ENCODE measurements at regions of chr19 and their contacts with region 1.

Region 1: GRCh38 chr19:49200238-49200862 is 42.8 kb downstream of the TRPM4 start:
- DNase-seq: peak; percentile 77
- H3K4me3 ChIP-seq: no peak overlapping the region
- H3K27ac ChIP-seq: no peak overlapping the region
- H3K4me1 ChIP-seq: no peaks in the 10 kb centered on the region; a peak in 1 of 4 replicates
- H3K27me3 ChIP-seq: no peaks in the 10 kb centered on the region
- CTCF ChIP-seq: no peak
- EP300 ChIP-seq: no peak
- RAD21 ChIP-seq: no peak

Region 2: GRCh38 chr19:49085020-49085867 is 115.1 kb before region 1 on chr19 and contains the start of gene SNRNP70:
- CTCF ChIA-PET with region 1: interaction called, 10 read pairs
- POLR2A ChIA-PET with region 1: no interaction called
- DNase-seq: peak; percentile 100
- H3K4me3 ChIP-seq: peak within 1 kb of the TSS; percentile 78 to 99
- H3K27ac ChIP-seq: peak within 1 kb of the TSS; percentile 77 to 89
- H3K4me1 ChIP-seq: peaks cover 10 to 12% of the 10 kb centered on the region in 2 experiments; a peak in 1 of 4 replicates
- H3K27me3 ChIP-seq: no peaks in the 10 kb centered on the region
- CTCF ChIP-seq: no peak
- EP300 ChIP-seq: no peak
- RAD21 ChIP-seq: no peak
- polyA plus RNA-seq, gene SNRNP70: 272 and 359 TPM in 2 replicates

Region 3: DNA sequence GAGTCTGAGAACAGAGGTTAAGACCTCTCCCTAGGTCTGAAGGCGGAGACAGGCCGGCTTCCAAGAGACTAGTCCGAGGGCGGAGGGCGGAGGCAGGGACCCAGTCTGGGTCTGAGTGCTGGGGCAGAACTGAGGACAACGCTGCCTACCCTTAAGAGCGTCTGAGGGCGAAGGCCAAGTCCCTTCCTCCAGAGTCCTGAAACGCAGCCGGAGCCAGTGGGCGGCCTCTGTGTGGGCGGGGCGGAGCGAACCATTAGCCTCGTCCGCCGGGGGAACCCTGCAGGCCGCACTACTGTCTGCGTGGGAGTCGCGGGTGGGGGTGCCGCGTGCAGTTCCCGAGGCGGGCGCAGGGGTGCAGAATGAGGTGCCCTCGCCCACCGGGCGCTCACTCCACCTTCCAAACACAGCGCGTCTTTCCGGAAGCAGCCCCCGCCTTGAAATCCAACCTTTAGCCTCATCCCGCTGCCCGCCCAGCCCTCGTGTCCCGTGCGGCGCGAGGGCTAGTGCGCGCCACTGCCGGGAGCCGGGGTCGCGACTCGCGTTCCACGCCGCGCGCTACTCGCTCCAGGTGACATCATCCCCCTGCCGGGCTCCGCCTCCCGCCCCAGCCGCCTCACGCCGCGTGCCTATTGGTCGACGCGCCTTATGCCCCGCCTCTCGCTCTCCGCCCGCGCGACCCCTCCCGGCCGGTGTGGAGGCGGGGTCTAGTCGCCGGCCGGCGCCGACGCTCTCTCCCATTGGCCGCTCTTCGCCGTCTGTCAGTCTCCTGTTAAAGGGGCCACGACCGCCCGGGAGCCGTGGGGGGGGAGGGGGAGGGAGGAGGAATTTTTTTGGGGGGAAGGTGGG is 81.6 kb before region 1 on chr19 and contains the start of gene C19orf73:
- CTCF ChIA-PET with region 1: interaction called, 17 read pairs
- POLR2A ChIA-PET with region 1: interaction called, 5 read pairs
- DNase-seq: peak; percentile 99
- H3K4me3 ChIP-seq: peak within 1 kb of the TSS; percentile 61 to 69
- H3K27ac ChIP-seq: peak within 1 kb of the TSS; percentile 82 to 93
- H3K4me1 ChIP-seq: peaks cover 5 to 21% of the 10 kb centered on the region in 2 experiments; a peak in 1 of 4 replicates
- H3K27me3 ChIP-seq: no peaks in the 10 kb centered on the region
- CTCF ChIP-seq: 0 out of 2 replicates have a peak, but pooled peaks have one; percentile 13
- EP300 ChIP-seq: no peak
- RAD21 ChIP-seq: no peak
- polyA plus RNA-seq, gene C19orf73: 2.6 and 3.0 TPM in 2 replicates

Region 4: DNA sequence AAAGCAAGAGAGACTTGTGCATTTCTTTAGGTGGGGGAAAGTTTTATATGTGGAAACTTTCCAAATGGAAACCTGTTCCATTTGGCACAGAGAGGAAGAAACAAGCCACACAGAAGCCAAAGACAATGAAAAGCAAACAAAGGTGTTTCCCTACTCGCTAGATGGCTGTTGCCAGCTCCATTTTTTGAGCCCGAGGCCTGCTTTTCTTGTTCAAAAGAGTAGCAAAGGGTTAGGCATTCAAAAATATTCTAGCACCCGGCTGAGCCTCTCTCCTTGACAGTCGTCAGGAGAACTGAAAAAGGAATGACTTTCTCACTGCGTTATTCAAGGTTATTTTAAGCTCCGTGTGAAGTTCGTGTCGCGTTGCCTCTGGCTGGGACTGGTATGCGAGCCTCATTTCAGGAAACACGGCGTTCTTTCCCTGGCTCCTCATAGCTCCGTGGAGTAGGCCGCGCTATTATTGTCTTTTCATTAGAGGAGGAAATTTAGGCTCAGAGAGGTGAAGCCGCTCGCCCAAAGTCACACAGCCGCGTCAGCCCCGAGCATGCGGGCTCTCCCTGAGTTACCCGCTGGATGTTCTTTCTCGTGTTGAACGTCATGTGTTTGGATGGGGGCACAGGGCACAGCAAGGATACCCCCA is 35.1 kb before region 1 on chr19:
- CTCF ChIA-PET with region 1: interaction called, 33 read pairs
- POLR2A ChIA-PET with region 1: no interaction called
- DNase-seq: no peak
- H3K4me3 ChIP-seq: no peak overlapping the region
- H3K27ac ChIP-seq: no peak overlapping the region
- H3K4me1 ChIP-seq: no peaks in the 10 kb centered on the region
- H3K27me3 ChIP-seq: no peaks in the 10 kb centered on the region
- CTCF ChIP-seq: no peak
- EP300 ChIP-seq: no peak
- RAD21 ChIP-seq: no peak

Region 5: GRCh38 chr19:49189259-49189658 is 11.1 kb before region 1 on chr19:
- CTCF ChIA-PET with region 1: interaction called, 26 read pairs
- POLR2A ChIA-PET with region 1: no interaction called
- DNase-seq: no peak
- H3K4me3 ChIP-seq: no peak overlapping the region
- H3K27ac ChIP-seq: no peak overlapping the region
- H3K4me1 ChIP-seq: no peaks in the 10 kb centered on the region
- H3K27me3 ChIP-seq: no peaks in the 10 kb centered on the region
- CTCF ChIP-seq: no peak
- EP300 ChIP-seq: no peak
- RAD21 ChIP-seq: no peak